Head of caudate nucleus (tissue), 42 donors: ENCODE measurements at regions of chr7 and their contacts with region 1.

Region 1: GRCh38 chr7:4797858-4798705 is 22.7 kb downstream of the AP5Z1 start:
- DNase-seq: peak in 38 of 42 donors; percentile 28 to 83 (median 60)

Region 2: GRCh38 chr7:4762121-4763055 is 35.7 kb before region 1 on chr7:
- intact Hi-C with region 1: no loop called
- DNase-seq: no peak

Region 3: DNA sequence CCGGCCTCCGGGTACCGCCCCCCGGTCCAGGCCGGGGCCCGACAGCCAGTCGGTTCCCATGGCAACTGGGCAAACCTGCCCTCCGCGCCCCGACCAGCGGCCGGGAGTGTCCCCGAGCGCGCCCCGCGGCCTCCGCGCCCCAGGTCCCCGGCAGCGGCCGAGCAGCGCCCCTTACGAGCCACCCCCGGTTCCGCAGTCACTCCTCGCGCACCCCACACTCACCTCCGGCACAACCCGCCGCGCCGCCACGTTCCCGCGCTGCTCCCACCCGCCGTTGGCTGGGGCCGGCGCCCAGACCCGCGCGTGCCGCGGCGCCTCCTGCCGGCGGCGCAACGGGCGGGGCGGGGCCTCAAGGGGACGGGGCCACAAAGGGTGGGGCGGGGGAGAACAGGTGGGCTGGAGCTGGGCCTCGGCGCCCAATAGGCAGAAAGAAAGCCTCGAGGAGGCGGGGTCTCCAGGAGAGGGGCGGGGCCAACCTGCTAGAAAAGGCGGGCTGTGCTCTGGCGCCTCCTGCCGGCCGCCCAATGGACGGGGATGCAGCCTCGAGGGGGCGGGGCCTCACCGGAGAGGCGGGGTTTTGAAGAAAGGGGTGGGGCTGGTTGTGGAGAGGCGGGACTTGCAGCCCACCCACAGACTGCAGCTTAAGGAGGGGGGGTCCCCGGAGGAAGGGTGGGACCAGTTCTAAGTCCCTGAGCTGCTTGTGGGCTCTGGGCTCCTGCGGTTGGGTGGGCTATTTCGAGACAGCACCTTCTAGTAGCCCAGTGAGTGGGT is 85.5 kb after region 1 on chr7 and contains the start of gene RADIL:
- intact Hi-C with region 1: loop called (anchors 5 kb)
- DNase-seq: peak; percentile 84 to 98 (median 94)

Region 4: GRCh38 chr7:5088906-5089305 is 290.8 kb after region 1 on chr7:
- intact Hi-C with region 1: loop called (anchors 5 kb)
- DNase-seq: no peak